ENCODE measurements at regions of chr5 and their contacts with region 1.

Region 1: GRCh38 chr5:68805444-68805843 is 288.4 kb upstream of the SLC30A5 start:
- DNase-seq: no peak
- ATAC-seq: no peak

Region 2: GRCh38 chr5:68861099-68861498 is 55.7 kb after region 1 on chr5:
- intact Hi-C with region 1: loop called in 1 of 2 experiments (anchors 2 kb)
- DNase-seq: no peak
- ATAC-seq: no peak

Region 3: GRCh38 chr5:69317391-69317790 is 511.9 kb after region 1 on chr5:
- intact Hi-C with region 1: no loop called
- DNase-seq: no peak
- ATAC-seq: no peak